Activated T-helper 1 cell treated with anti-CD3 and anti-CD28 coated beads, Interleukin-12 subunit alpha, Interleukin-12 subunit beta, Interleukin-2, Interleukin-4 antibody, amounts not matched to agents 30 ng/mL and 10 ng/mL and 1 ng/mL, durations not matched to agents 14 hours and 24 hours and 36 hours (primary cell): ENCODE measurements at regions of chr3 and their contacts with region 1.

Region 1: GRCh38 chr3:177359593-177360357 is 162.5 kb upstream of the TBL1XR1 start:
- DNase-seq: peak; percentile 93
- H3K4me3 Mint-ChIP-seq: peak overlapping the region; percentile 80
- H3K27ac Mint-ChIP-seq: peak overlapping the region; percentile 97
- H3K4me1 Mint-ChIP-seq: peaks cover 48% of the 10 kb centered on the region
- H3K27me3 Mint-ChIP-seq: no peaks in the 10 kb centered on the region

Region 2: GRCh38 chr3:177144923-177145780 is 214.6 kb before region 1 on chr3:
- intact Hi-C with region 1: loop called (anchors 1 kb)
- DNase-seq: peak; percentile 35
- H3K4me3 Mint-ChIP-seq: peak overlapping the region; percentile 61
- H3K27ac Mint-ChIP-seq: peak overlapping the region; percentile 93
- H3K4me1 Mint-ChIP-seq: peaks cover 69% of the 10 kb centered on the region
- H3K27me3 Mint-ChIP-seq: no peaks in the 10 kb centered on the region

Region 3: DNA sequence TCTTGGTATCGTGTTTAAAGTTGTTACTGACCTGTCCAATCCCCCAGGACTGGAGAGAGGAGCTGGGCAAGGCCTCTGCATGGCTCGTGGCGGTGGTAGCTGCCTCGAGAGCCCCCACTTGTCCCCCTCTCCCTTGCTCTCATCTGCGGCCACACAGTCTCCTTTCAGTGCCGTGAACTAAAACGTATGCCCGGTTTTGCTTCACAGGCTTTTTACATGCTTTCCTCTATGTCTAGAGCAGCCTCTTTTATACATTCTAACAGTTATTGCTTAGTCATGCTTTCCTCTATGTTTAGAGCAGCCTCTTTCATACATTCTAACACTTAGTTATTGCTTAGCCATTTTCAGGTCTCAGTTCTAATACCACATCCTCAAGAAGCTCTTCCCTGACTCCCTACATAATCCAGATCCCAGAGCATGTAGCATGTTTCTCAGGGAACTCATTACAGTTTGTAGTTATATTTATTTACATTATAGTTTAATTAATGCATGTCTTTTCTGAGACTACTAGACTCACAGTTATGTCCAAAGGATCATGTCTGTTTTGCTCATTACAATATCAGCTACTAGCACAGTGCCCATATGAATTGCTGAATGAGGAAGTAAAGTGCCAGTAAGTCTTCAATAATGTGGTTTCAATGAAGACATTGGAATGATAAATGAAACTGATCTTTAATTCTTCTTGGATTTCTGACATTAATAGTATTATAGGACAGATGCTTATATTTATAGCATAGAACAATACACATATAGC is 96.0 kb before region 1 on chr3:
- intact Hi-C with region 1: no loop called
- DNase-seq: no peak
- H3K4me3 Mint-ChIP-seq: no peak overlapping the region
- H3K27ac Mint-ChIP-seq: no peak overlapping the region
- H3K4me1 Mint-ChIP-seq: no peaks in the 10 kb centered on the region
- H3K27me3 Mint-ChIP-seq: no peaks in the 10 kb centered on the region

Region 4: GRCh38 chr3:177337541-177338331 is 22.0 kb before region 1 on chr3:
- intact Hi-C with region 1: loop called (anchors 1 kb)
- DNase-seq: peak; percentile 66
- H3K4me3 Mint-ChIP-seq: peak overlapping the region; percentile 51
- H3K27ac Mint-ChIP-seq: peak overlapping the region; percentile 95
- H3K4me1 Mint-ChIP-seq: peaks cover 65% of the 10 kb centered on the region
- H3K27me3 Mint-ChIP-seq: peaks cover 8% of the 10 kb centered on the region

Region 5: GRCh38 chr3:177426878-177427495 is 67.2 kb after region 1 on chr3:
- intact Hi-C with region 1: loop called (anchors 1 kb)
- DNase-seq: peak; percentile 65
- H3K4me3 Mint-ChIP-seq: peak overlapping the region; percentile 20
- H3K27ac Mint-ChIP-seq: peak overlapping the region; percentile 59
- H3K4me1 Mint-ChIP-seq: peaks cover 29% of the 10 kb centered on the region
- H3K27me3 Mint-ChIP-seq: peaks cover 16% of the 10 kb centered on the region

Region 6: DNA sequence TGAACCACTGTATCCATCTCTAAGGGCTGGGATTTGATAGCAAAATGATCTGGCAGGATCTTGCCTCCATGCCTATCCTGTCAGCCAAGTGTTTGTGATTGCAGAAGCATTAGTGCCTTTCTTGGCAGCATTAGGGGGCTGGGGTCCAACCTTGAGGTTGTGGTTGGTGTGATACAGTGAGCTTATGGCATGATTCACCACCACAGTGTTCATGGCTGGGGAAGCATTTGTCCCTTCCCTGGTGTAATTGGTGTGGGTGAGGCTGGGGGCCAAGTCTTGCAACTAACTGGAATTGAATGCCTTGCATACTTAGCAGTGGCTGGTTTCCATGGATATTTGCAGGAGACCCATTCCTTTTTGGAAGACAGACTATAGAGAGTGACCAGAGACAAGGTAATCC is 108.6 kb after region 1 on chr3:
- intact Hi-C with region 1: no loop called
- DNase-seq: no peak
- H3K4me3 Mint-ChIP-seq: no peak overlapping the region
- H3K27ac Mint-ChIP-seq: no peak overlapping the region
- H3K4me1 Mint-ChIP-seq: no peaks in the 10 kb centered on the region
- H3K27me3 Mint-ChIP-seq: no peaks in the 10 kb centered on the region

Region 7: GRCh38 chr3:177787279-177788041 is 427.7 kb after region 1 on chr3:
- intact Hi-C with region 1: loop called (anchors 2 kb)
- DNase-seq: no peak
- H3K4me3 Mint-ChIP-seq: no peak overlapping the region
- H3K27ac Mint-ChIP-seq: peak overlapping the region; percentile 34
- H3K4me1 Mint-ChIP-seq: peaks cover 14% of the 10 kb centered on the region
- H3K27me3 Mint-ChIP-seq: no peaks in the 10 kb centered on the region

Region 8: DNA sequence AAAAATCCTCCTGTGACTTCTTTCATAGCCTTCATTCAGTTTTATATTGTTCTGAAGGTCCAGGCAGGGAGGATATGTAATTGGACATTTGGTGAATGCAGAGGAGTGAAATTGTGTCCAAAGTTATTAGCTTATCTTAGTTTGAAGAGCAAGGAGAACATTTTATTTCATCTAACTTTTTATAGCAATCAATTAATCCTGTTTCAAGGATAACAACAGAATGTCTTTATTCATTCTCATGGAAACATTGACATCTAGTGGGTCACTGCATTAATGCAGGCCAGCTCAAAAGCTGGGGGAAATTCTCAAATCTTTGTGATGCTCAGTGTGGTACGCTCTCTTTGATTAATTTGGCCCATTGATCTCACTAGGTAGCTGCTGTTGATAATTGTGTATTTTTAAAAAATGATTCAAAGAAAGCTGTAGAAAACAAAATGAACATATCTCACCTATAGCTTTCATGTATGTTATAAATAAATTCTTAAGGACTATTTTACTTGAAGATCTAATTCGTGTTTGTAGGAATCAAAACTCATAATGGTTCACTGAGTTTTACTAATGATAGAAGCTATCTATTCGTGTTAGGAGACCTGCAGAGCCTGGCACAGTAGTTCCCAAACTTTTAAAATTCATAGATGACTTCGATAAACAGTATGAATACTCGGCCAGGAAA is 1025.6 kb after region 1 on chr3:
- intact Hi-C with region 1: loop called (anchors 1 kb)
- DNase-seq: no peak
- H3K4me3 Mint-ChIP-seq: no peak overlapping the region
- H3K27ac Mint-ChIP-seq: no peak overlapping the region
- H3K4me1 Mint-ChIP-seq: no peaks in the 10 kb centered on the region
- H3K27me3 Mint-ChIP-seq: no peaks in the 10 kb centered on the region